ENCODE measurements at regions of chr10 and their contacts with region 1.

Region 1: GRCh38 chr10:43138021-43138756 is at the start of gene CSGALNACT2:
- DNase-seq: peak; percentile 90
- H3K4me3 Mint-ChIP-seq: peak within 1 kb of the TSS; percentile 89
- H3K27ac Mint-ChIP-seq: peak within 1 kb of the TSS; percentile 97
- H3K4me1 Mint-ChIP-seq: peaks cover 62% of the 10 kb centered on the region
- H3K27me3 Mint-ChIP-seq: no peaks in the 10 kb centered on the region
- total RNA-seq, gene CSGALNACT2: 36.2 to 41.0 TPM

Region 2: GRCh38 chr10:42488416-42488815 is 649.8 kb before region 1 on chr10:
- CTCF ChIA-PET with region 1: no interaction called
- POLR2A ChIA-PET with region 1: interaction called, 10 read pairs
- DNase-seq: no peak
- H3K4me3 Mint-ChIP-seq: no peak overlapping the region
- H3K27ac Mint-ChIP-seq: no peak overlapping the region
- H3K4me1 Mint-ChIP-seq: no peaks in the 10 kb centered on the region
- H3K27me3 Mint-ChIP-seq: no peaks in the 10 kb centered on the region

Region 3: DNA sequence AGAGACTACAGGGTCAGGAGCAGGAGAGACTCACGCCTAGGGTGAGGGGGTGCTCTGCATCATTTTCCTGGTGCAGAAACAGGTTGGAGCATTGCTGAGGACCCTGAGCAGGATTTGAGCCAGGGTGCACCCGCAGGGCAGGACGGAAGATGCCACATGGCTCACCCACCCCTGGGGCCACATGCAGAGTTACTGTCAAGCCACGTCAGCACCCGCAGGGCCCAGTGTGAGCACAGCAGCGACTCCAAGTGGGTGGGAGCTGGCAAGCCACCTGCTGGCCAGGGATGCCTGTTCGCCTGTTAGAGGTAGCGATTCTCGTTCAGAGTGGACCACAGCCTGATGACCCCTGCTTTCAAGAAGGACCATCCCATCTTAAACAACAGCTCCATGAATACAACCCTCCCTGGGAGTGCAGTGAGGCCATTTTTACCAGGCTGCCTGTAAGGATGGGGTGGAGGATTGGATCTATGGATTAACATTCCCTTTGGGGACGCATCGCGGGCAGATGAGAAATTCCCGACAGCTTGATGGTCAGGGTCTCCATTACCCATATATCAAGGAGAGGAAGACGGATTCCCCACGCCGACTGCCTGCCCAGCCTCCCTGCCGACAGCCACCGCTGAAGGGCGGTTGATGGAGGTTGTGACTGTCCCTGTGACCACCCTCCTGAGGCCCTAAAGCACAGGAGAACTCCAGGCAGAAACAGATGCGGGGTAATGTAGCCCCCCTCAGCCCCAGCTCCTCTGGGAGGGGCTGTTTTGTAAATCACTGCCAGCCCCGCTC is 162.4 kb before region 1 on chr10:
- CTCF ChIA-PET with region 1: no interaction called
- POLR2A ChIA-PET with region 1: no interaction called
- DNase-seq: no peak
- H3K4me3 Mint-ChIP-seq: no peak overlapping the region
- H3K27ac Mint-ChIP-seq: no peak overlapping the region
- H3K4me1 Mint-ChIP-seq: peaks cover 3% of the 10 kb centered on the region
- H3K27me3 Mint-ChIP-seq: no peaks in the 10 kb centered on the region

Region 4: GRCh38 chr10:43078987-43079275 is 59.3 kb before region 1 on chr10:
- CTCF ChIA-PET with region 1: no interaction called
- POLR2A ChIA-PET with region 1: no interaction called
- DNase-seq: peak; percentile 20
- H3K4me3 Mint-ChIP-seq: peak overlapping the region; percentile 5
- H3K27ac Mint-ChIP-seq: no peak overlapping the region
- H3K4me1 Mint-ChIP-seq: peaks cover 5% of the 10 kb centered on the region
- H3K27me3 Mint-ChIP-seq: peaks cover 31% of the 10 kb centered on the region

Region 5: DNA sequence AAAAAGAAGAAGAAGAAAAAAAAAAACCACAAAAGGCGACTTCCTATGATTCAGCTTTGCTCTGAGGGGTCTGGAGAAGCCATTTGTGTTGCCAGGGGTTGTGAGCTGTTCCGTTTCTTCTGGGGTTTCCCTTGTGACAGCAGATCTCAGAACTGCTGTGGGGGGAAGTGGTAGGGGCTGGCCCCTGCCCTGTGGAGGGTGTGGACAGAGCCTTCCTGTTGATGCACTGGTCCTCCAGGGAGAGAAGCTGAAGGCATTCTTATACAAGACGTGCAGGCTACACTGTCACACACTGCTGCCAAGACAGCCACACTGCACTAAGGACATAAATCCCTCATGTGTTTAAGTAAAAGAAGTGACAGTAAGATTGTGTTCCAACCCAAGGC is 17.3 kb before region 1 on chr10:
- CTCF ChIA-PET with region 1: interaction called, 9 read pairs
- POLR2A ChIA-PET with region 1: interaction called, 14 read pairs
- DNase-seq: peak; percentile 78
- H3K4me3 Mint-ChIP-seq: peak overlapping the region; percentile 46
- H3K27ac Mint-ChIP-seq: peak overlapping the region; percentile 97
- H3K4me1 Mint-ChIP-seq: peaks cover 57% of the 10 kb centered on the region
- H3K27me3 Mint-ChIP-seq: no peaks in the 10 kb centered on the region